SK-N-SH (cell line): ENCODE measurements at regions of chr15 and their contacts with region 1.

Region 1: GRCh38 chr15:88615303-88616107 is 5.6 kb upstream of the AEN start:
- DNase-seq: no peak
- H3K4me3 ChIP-seq: no peak overlapping the region
- H3K27ac ChIP-seq: no peak overlapping the region
- H3K4me1 ChIP-seq: peaks cover 0 to 4% of the 10 kb centered on the region in 2 experiments; a peak in 1 of 4 replicates
- H3K27me3 ChIP-seq: no peaks in the 10 kb centered on the region
- CTCF ChIP-seq: no peak
- EP300 ChIP-seq: no peak
- RAD21 ChIP-seq: no peak

Region 2: DNA sequence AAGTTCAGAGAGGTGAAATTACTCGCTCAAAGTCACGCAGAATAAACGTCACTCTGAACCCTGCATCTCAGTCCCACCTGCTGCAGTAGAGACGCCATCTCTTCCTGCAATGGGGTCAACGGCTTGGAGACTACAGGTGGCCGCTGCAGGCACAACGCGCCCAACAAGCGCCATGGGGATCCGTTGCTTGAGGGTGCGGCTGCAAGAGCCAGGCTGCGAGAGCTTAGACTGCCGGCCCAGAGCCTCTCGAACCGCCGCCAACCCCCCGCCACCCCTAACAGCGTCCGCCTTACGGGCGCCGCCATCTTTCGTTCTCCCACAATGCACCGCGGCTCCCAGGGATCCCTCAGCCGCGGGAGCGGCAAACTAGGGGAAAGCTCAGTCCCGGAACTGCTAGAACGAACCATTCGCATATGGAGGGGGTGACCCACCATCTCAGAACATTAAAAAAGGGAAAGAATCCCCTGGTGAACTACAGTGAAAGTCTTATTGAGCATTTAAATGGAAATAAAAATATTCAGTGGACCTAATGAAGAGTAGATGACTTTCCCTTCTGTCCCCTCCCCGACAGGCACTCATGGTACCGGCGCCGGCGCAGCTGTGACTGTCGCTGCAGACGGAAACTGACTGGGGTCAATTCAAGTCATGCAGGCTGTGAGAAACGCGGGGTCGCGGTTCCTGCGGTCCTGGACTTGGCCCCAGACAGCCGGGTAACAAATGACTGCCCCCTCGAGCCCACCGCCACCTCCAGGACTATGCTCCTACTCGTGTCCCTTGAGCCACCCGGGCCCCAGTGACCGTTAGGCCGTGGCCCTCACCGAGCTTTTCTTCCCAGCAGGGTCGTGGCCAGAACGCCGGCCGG is 148.2 kb before region 1 on chr15 and contains the starts of genes MRPL46 and MRPS11:
- CTCF ChIA-PET with region 1: interaction called, 28 read pairs
- POLR2A ChIA-PET with region 1: no interaction called
- DNase-seq: peak; percentile 92
- H3K4me3 ChIP-seq: peak within 1 kb of the TSS; percentile 94 to 97
- H3K27ac ChIP-seq: peak within 1 kb of the TSS; percentile 77 to 95
- H3K4me1 ChIP-seq: peaks cover 8 to 17% of the 10 kb centered on the region in 2 experiments; a peak in 3 of 4 replicates
- H3K27me3 ChIP-seq: no peaks in the 10 kb centered on the region
- CTCF ChIP-seq: no peak
- EP300 ChIP-seq: peak in 1 of 2 experiments; percentile 58; a peak in 1 of 4 replicates
- RAD21 ChIP-seq: no peak
- polyA plus RNA-seq, gene MRPL46: 33.8 and 36.6 TPM in 2 replicates
- polyA plus RNA-seq, gene MRPS11: 70.0 and 101 TPM in 2 replicates

Region 3: DNA sequence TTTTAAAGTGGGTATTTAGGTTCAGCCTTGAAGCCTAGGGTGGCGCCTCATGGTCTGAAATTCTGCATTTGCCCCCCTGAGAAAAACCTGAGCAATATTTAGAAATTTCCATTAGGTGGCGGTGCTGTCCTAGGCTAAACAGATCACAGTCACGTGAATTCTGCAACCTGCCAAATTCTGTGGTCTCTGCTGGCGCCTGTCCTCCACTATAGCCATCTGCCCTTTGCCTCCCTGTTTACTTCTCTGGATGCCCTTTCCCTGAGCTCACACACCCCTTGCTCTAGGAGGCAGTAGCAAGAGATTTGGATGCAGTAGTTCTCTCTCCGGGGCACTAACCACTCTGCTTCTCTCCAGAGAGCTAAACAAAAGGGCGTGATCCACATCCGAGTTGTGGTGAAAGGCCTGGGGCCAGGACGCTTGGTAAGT is 138.9 kb before region 1 on chr15:
- CTCF ChIA-PET with region 1: interaction called, 44 read pairs
- POLR2A ChIA-PET with region 1: no interaction called
- DNase-seq: peak; percentile 74
- H3K4me3 ChIP-seq: no peak overlapping the region; a peak in 1 of 4 replicates
- H3K27ac ChIP-seq: no peak overlapping the region; a peak in 1 of 4 replicates
- H3K4me1 ChIP-seq: peaks cover 0 to 3% of the 10 kb centered on the region in 2 experiments; a peak in 1 of 4 replicates
- H3K27me3 ChIP-seq: no peaks in the 10 kb centered on the region
- CTCF ChIP-seq: peak; percentile 63
- EP300 ChIP-seq: no peak
- RAD21 ChIP-seq: peak; percentile 90

Region 4: GRCh38 chr15:88605189-88606069 is 10.1 kb before region 1 on chr15:
- CTCF ChIA-PET with region 1: interaction called, 10 read pairs
- POLR2A ChIA-PET with region 1: no interaction called
- DNase-seq: peak; percentile 70
- H3K4me3 ChIP-seq: peak overlapping the region in 1 of 2 experiments; percentile 48; a peak in 2 of 4 replicates
- H3K27ac ChIP-seq: no peak overlapping the region
- H3K4me1 ChIP-seq: peaks cover 0 to 16% of the 10 kb centered on the region in 2 experiments; a peak in 1 of 4 replicates
- H3K27me3 ChIP-seq: peaks cover 24% of the 10 kb centered on the region
- CTCF ChIP-seq: no peak
- EP300 ChIP-seq: no peak
- RAD21 ChIP-seq: no peak